ENCODE measurements at regions of chr7 and their contacts with region 1.

Region 1: DNA sequence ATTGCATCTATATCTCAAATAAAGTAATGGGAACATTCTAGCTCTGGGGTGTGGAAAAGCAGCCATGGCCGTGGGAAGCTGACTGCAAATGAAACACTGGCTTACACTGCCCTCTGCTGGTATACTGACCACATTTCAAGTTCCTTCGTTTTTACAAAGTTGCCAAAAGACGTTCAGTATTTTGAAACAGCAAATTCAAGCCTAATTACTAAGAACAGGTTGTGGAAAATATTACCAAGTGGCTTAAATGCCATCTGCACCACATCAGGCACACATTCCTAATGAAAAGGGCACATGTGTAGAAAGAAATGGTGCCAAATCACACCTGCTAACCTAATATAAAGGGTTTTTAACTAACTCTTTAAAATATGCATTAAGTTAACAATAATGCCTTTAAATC is 83.9 kb downstream of the JAZF1 start:
- DNase-seq: peak; percentile 56
- H3K4me3 ChIP-seq: no peak overlapping the region
- H3K27ac ChIP-seq: no peak overlapping the region
- H3K4me1 ChIP-seq: no peaks in the 10 kb centered on the region
- H3K27me3 ChIP-seq: no peaks in the 10 kb centered on the region
- CTCF ChIP-seq: peak; percentile 80

Region 2: GRCh38 chr7:27901028-27901760 is 195.5 kb before region 1 on chr7:
- intact Hi-C with region 1: no loop called
- DNase-seq: no peak
- H3K4me3 ChIP-seq: no peak overlapping the region
- H3K27ac ChIP-seq: peak overlapping the region; percentile 35
- H3K4me1 ChIP-seq: no peaks in the 10 kb centered on the region
- H3K27me3 ChIP-seq: no peaks in the 10 kb centered on the region
- CTCF ChIP-seq: no peak

Region 3: GRCh38 chr7:28062197-28062991 is 34.3 kb before region 1 on chr7:
- intact Hi-C with region 1: loop called (anchors 2 kb)
- DNase-seq: peak; percentile 82
- H3K4me3 ChIP-seq: no peak overlapping the region
- H3K27ac ChIP-seq: no peak overlapping the region
- H3K4me1 ChIP-seq: no peaks in the 10 kb centered on the region
- H3K27me3 ChIP-seq: no peaks in the 10 kb centered on the region
- CTCF ChIP-seq: peak; percentile 52

Measured in colonic mucosa (tissue), 4 donors.